ENCODE measurements at regions of chrX and their contacts with region 1.

Region 1: GRCh38 chrX:71128915-71129765 is 10.7 kb downstream of the MED12 start:
- DNase-seq: peak; percentile 83
- ATAC-seq: peak; percentile 96
- H3K4me3 Mint-ChIP-seq: peak overlapping the region; percentile 41
- H3K27ac Mint-ChIP-seq: peak overlapping the region; percentile 70
- H3K4me1 Mint-ChIP-seq: peaks cover 14% of the 10 kb centered on the region
- H3K27me3 Mint-ChIP-seq: no peaks in the 10 kb centered on the region

Region 2: DNA sequence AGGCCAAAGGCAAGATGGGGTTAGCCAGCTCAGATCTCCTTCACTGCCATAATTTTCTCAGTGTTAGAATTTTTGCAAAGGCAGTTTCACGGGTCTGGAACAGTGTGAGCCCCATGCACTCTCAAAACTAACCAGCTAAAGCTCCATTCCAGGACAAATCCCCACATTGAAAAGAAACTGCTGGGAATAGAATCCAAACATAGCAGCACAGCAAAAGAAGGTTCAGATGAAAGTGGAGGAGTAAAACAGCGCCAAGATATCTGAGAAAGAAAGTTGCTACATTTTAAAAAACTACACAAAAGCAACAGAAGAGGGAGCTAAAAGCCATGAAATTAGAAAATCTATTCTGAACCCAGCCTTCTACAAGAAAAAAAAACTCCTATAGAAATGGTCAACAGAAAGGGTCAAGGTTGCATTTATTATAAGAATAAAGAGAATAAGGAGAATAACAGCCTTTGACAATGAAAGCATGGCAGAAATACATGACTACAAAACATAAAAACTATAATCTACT is 158.6 kb before region 1 on chrX:
- CTCF ChIA-PET with region 1: interaction called, 3 read pairs
- POLR2A ChIA-PET with region 1: no interaction called
- intact Hi-C with region 1: loop called in 1 of 2 experiments (anchors 1 kb)
- DNase-seq: no peak
- ATAC-seq: no peak
- H3K4me3 Mint-ChIP-seq: no peak overlapping the region
- H3K27ac Mint-ChIP-seq: no peak overlapping the region
- H3K4me1 Mint-ChIP-seq: peaks cover 3% of the 10 kb centered on the region
- H3K27me3 Mint-ChIP-seq: no peaks in the 10 kb centered on the region

Region 3: DNA sequence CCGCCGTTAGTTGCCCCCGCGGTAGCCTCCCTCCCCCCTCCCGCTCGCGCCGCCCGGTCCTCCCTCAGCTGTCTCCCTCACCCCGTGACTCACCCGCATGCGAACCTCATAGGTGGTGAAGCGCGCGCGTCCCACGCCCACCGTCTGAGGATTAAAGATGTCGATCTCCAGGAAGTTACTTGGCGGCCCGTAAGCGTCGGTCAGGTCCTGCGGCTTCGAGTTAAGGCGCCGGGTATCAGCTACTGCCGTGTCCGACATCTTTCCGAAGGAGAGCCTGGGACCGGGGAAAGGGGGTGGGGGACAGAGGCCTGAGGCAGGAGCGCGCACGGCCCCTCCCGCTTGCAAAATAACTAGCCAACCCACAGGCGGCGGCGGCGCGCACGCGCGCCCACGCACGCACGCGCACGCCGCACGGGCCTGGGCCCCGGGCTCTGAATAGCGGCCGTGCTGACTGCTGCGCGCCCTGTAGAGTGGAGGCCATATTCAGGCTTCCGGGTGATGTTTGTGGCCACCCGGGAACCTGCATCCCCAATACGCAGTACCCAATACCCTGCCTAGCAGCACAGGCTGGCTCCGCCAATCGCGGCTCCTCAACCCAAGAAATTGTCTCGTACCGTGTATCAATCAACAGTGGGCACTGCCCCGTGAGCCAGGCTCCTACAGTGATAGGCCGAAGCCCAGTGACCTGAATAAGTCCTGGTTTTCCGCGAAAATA is 60.9 kb before region 1 on chrX and contains the start of gene SNX12:
- CTCF ChIA-PET with region 1: interaction called, 5 read pairs
- POLR2A ChIA-PET with region 1: no interaction called
- intact Hi-C with region 1: loop called in 1 of 2 experiments (anchors 1 kb)
- DNase-seq: peak; percentile 92
- ATAC-seq: peak; percentile 93
- H3K4me3 Mint-ChIP-seq: peak within 1 kb of the TSS; percentile 91
- H3K27ac Mint-ChIP-seq: peak within 1 kb of the TSS; percentile 93
- H3K4me1 Mint-ChIP-seq: peaks cover 17% of the 10 kb centered on the region
- H3K27me3 Mint-ChIP-seq: no peaks in the 10 kb centered on the region
- total RNA-seq, gene SNX12: 43.2 to 44.6 TPM

Region 4: GRCh38 chrX:71095543-71095911 is 33.6 kb before region 1 on chrX and contains the start of gene FOXO4:
- CTCF ChIA-PET with region 1: interaction called, 17 read pairs
- POLR2A ChIA-PET with region 1: no interaction called
- intact Hi-C with region 1: loop called (anchors 1 kb)
- DNase-seq: peak; percentile 92
- ATAC-seq: peak; percentile 93
- H3K4me3 Mint-ChIP-seq: peak within 1 kb of the TSS; percentile 89
- H3K27ac Mint-ChIP-seq: peak within 1 kb of the TSS; percentile 83
- H3K4me1 Mint-ChIP-seq: peaks cover 27% of the 10 kb centered on the region
- H3K27me3 Mint-ChIP-seq: no peaks in the 10 kb centered on the region
- total RNA-seq, gene FOXO4: 9.5 to 10.8 TPM

Region 5: GRCh38 chrX:71111141-71111843 is 17.8 kb before region 1 on chrX and contains the start of gene IL2RG:
- CTCF ChIA-PET with region 1: interaction called, 15 read pairs
- POLR2A ChIA-PET with region 1: no interaction called
- intact Hi-C with region 1: no loop called
- DNase-seq: peak; percentile 83
- ATAC-seq: peak; percentile 83
- H3K4me3 Mint-ChIP-seq: peak within 1 kb of the TSS; percentile 99
- H3K27ac Mint-ChIP-seq: peak within 1 kb of the TSS; percentile 99
- H3K4me1 Mint-ChIP-seq: peaks cover 39% of the 10 kb centered on the region
- H3K27me3 Mint-ChIP-seq: no peaks in the 10 kb centered on the region
- total RNA-seq, gene IL2RG: 278 to 342 TPM

Measured in activated CD4-positive, alpha-beta T cell treated with anti-CD3 and anti-CD28 coated beads for 36 hours (primary cell).